Activated CD4-positive, alpha-beta memory T cell treated with anti-CD3 and anti-CD28 coated beads, Interleukin-2, amount 10 ng/mL, durations not matched to agents 7 days and 5 days (primary cell): ENCODE measurements at regions of chr7 and their contacts with region 1.

Region 1: GRCh38 chr7:105759670-105760550 is 116.5 kb downstream of the ATXN7L1 start:
- DNase-seq: no peak
- H3K4me3 Mint-ChIP-seq: no peak overlapping the region
- H3K27ac Mint-ChIP-seq: no peak overlapping the region
- H3K4me1 Mint-ChIP-seq: peaks cover 30% of the 10 kb centered on the region
- H3K27me3 Mint-ChIP-seq: peaks cover 10% of the 10 kb centered on the region

Region 2: GRCh38 chr7:105678811-105679495 is 81.0 kb before region 1 on chr7:
- CTCF ChIA-PET with region 1: interaction called, 5 read pairs
- POLR2A ChIA-PET with region 1: interaction called, 19 read pairs
- DNase-seq: peak; percentile 35
- H3K4me3 Mint-ChIP-seq: peak overlapping the region; percentile 81
- H3K27ac Mint-ChIP-seq: peak overlapping the region; percentile 92
- H3K4me1 Mint-ChIP-seq: peaks cover 57% of the 10 kb centered on the region
- H3K27me3 Mint-ChIP-seq: no peaks in the 10 kb centered on the region

Region 3: GRCh38 chr7:105808703-105809590 is 49.0 kb after region 1 on chr7:
- CTCF ChIA-PET with region 1: interaction called, 19 read pairs
- POLR2A ChIA-PET with region 1: interaction called, 4 read pairs
- DNase-seq: peak; percentile 88
- H3K4me3 Mint-ChIP-seq: peak overlapping the region; percentile 18
- H3K27ac Mint-ChIP-seq: peak overlapping the region; percentile 94
- H3K4me1 Mint-ChIP-seq: peaks cover 71% of the 10 kb centered on the region
- H3K27me3 Mint-ChIP-seq: peaks cover 3% of the 10 kb centered on the region

Region 4: DNA sequence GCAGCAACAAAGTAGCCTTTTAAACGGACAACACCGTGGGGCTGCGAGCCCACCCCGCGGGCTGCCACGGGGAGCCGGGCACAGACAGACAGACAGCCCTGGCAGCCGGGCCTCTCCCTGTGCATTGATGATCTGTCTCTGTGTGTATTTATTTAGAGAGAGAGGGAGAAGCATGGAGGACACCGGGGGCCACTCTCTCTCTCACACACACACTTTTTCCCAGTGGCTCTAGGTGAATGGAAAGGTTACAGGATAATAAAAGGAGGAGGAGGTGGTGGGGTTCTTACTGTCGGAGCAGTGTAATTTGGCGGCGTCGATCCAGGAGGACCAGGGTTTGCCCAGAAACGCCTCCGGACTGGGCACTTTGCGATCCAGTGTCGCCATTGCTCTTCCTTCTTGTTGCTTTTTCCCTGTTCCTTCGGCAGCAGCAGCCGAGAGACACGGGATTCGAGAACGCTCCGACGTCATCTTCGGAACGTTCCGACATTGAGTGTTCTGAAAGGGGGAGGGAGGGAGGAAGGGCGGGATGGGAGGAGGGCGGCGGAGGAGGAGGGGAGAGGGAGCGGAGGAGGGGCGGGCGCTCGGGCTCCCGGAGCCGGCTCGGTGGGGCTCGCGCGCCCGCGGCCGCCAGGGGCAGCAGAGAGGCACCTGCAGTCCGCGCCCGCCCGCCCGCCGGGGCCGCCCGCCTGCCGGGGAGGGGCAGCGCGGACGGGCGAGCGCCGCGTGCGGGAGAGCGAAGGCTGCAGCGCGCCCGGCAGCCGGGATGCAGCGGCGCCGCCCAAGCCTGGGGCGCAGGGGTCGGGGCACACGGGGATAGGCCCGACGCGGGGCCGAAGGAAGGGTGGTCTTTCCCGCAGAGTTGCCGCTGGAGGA is 116.4 kb after region 1 on chr7 and contains the start of gene ATXN7L1:
- CTCF ChIA-PET with region 1: interaction called, 16 read pairs
- POLR2A ChIA-PET with region 1: interaction called, 4 read pairs
- DNase-seq: peak; percentile 90
- H3K4me3 Mint-ChIP-seq: peak within 1 kb of the TSS; percentile 89
- H3K27ac Mint-ChIP-seq: peak within 1 kb of the TSS; percentile 53
- H3K4me1 Mint-ChIP-seq: peaks cover 33% of the 10 kb centered on the region
- H3K27me3 Mint-ChIP-seq: peaks cover 20% of the 10 kb centered on the region
- total RNA-seq, gene ATXN7L1: 27.1 to 28.1 TPM

Region 5: GRCh38 chr7:106022193-106022821 is 262.4 kb after region 1 on chr7:
- CTCF ChIA-PET with region 1: interaction called, 22 read pairs
- POLR2A ChIA-PET with region 1: no interaction called
- DNase-seq: peak; percentile 81
- H3K4me3 Mint-ChIP-seq: peak overlapping the region; percentile 34
- H3K27ac Mint-ChIP-seq: peak overlapping the region; percentile 67
- H3K4me1 Mint-ChIP-seq: peaks cover 43% of the 10 kb centered on the region
- H3K27me3 Mint-ChIP-seq: peaks cover 46% of the 10 kb centered on the region